ENCODE measurements at regions of chr9 and their contacts with region 1.

Region 1: GRCh38 chr9:121698627-121699570 is 47.5 kb downstream of the DAB2IP start:
- DNase-seq: peak; percentile 74 to 78
- ATAC-seq: peak; percentile 9 to 78 (median 40)
- H3K4me3 ChIP-seq: peak overlapping the region; percentile 44 to 70 (median 57)
- H3K27ac ChIP-seq: peak overlapping the region; percentile 25 to 89 (median 80)
- H3K4me1 ChIP-seq: peaks cover 26 to 66% (median 43%) of the 10 kb centered on the region in 9 donors
- H3K27me3 ChIP-seq: peaks cover 0 to 54% (median 0%) of the 10 kb centered on the region in 7 donors
- CTCF ChIP-seq: no peak

Region 2: DNA sequence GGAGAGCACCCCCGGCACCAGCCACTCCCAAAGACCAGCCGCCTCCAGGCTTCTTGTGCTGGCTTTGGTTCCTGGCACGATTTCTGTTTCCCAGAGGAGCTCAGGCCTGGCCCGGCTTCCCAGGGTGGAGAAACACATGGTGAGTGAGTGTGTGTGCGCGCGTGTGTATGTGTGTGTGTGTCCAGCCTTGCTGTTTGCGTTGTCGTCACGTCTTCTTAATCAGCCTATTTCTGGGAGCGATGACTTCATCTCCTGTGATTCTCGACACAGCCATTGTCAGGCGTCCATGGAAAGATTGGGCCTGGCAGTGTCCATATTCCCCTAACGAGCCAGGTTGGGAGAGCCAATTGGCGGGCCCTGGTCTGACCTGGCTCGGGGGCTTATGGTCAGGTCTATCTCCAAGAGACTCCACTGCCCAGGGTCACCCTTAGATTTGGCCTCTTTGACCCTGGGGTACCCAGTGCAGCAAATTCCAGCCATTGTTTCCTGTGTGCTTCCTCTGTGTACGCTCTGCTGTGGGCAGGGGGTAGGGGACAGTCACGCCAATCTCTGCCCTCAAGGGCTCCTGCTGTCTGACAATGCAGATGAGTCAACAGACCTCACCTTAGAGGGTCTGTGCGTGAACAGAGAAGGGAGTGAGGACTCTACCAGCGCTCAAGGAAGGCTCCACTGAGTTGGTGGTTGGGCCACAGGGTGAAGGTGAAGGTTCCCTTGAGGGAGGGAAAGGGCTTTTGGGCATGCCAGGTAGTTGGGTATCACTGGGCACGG is 26.3 kb after region 1 on chr9:
- intact Hi-C with region 1: loop called in 1 of 10 experiments (anchors 2 kb)
- DNase-seq: peak; percentile 95 to 99
- ATAC-seq: peak; percentile 86 to 92 (median 88)
- H3K4me3 ChIP-seq: no peak overlapping the region
- H3K27ac ChIP-seq: peak overlapping the region; percentile 67 to 98 (median 92)
- H3K4me1 ChIP-seq: peaks cover 70 to 100% (median 98%) of the 10 kb centered on the region in 9 donors
- H3K27me3 ChIP-seq: no peaks in the 10 kb centered on the region
- CTCF ChIP-seq: no peak

Region 3: GRCh38 chr9:121744002-121744686 is 45.2 kb after region 1 on chr9:
- intact Hi-C with region 1: loop called in 4 of 10 experiments (anchors 5 to 10 kb)
- DNase-seq: peak; percentile 67 to 75
- ATAC-seq: peak; percentile 43 to 83 (median 73)
- H3K4me3 ChIP-seq: peak overlapping the region; percentile 23 to 64 (median 52)
- H3K27ac ChIP-seq: peak overlapping the region; percentile 89 to 98 (median 94)
- H3K4me1 ChIP-seq: peaks cover 57 to 100% (median 90%) of the 10 kb centered on the region in 9 donors
- H3K27me3 ChIP-seq: no peaks in the 10 kb centered on the region
- CTCF ChIP-seq: peak; percentile 29 to 77 (median 54)

Region 4: DNA sequence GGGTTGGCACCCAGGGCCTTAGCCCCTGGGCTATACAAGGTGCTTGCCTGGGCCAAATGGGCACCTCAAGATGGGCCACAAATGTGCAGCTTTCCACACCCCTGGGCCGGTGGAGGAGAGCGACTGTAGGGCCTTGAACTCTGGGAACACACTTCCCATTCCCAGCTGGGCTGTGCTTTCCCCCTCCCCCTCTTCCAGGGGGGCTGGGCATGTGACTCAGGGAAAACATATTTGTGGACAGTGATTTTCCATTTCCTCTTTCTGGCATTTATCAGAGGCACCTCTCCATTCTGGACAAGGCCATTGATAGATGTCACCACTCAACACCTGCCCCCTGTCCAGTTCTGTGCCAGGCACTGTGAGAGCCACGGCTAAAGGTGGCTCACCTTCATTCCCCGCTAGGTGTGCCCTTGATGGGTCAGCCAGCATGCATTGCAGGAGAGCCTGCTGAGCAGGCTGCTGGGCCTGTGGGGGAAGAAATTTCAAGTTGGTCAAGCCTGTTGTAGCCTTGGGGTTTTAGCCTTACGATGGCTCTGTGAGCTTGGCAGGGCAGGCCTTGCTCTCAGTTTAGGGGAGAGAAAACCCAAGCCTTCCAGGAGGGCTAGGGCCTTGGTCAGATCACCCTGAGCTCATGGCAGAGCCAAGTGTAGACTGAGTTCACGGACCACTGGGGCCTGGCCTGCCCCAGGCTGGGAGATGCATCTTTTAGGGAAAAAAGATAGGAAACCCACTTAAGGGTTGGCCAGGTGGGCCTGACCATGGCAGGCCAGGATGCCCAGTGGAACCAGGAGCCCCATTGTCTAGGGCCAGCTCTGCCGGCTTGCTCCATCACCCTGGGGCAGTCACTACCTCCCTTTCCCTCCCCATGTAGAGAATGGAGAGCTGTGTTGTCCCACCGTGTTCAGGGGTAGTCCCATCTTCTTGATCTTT is 66.4 kb after region 1 on chr9:
- intact Hi-C with region 1: no loop called
- DNase-seq: peak; percentile 65 to 77
- ATAC-seq: peak; percentile 67 to 88 (median 84)
- H3K4me3 ChIP-seq: no peak overlapping the region
- H3K27ac ChIP-seq: peak overlapping the region in 9 of 10 donors; percentile 62 to 86 (median 75)
- H3K4me1 ChIP-seq: peaks cover 16 to 44% (median 28%) of the 10 kb centered on the region in 9 donors
- H3K27me3 ChIP-seq: no peaks in the 10 kb centered on the region
- CTCF ChIP-seq: peak in 1 of 9 donors; percentile 14

Region 5: GRCh38 chr9:121852651-121853616 is 154.0 kb after region 1 on chr9:
- intact Hi-C with region 1: loop called in 2 of 10 experiments (anchors 10 kb)
- DNase-seq: peak; percentile 42 to 58
- ATAC-seq: peak; percentile 56 to 82 (median 76)
- H3K4me3 ChIP-seq: no peak overlapping the region
- H3K27ac ChIP-seq: peak overlapping the region in 6 of 10 donors; percentile 12 to 65 (median 25)
- H3K4me1 ChIP-seq: peaks cover 0 to 25% (median 11%) of the 10 kb centered on the region in 9 donors
- H3K27me3 ChIP-seq: no peaks in the 10 kb centered on the region
- CTCF ChIP-seq: no peak

Region 6: GRCh38 chr9:121992571-121993212 is 293.8 kb after region 1 on chr9:
- intact Hi-C with region 1: loop called in 2 of 10 experiments (anchors 5 kb)
- DNase-seq: peak; percentile 34 to 67
- ATAC-seq: peak; percentile 46 to 82 (median 78)
- H3K4me3 ChIP-seq: no peak overlapping the region
- H3K27ac ChIP-seq: no peak overlapping the region
- H3K4me1 ChIP-seq: peaks cover 0 to 28% (median 6%) of the 10 kb centered on the region in 9 donors
- H3K27me3 ChIP-seq: no peaks in the 10 kb centered on the region
- CTCF ChIP-seq: peak; percentile 80 to 91 (median 85)

Measured in heart right ventricle (tissue), 16 donors.